AG04450 (cell line): ENCODE measurements at regions of chr2 and their contacts with region 1.

Region 1: DNA sequence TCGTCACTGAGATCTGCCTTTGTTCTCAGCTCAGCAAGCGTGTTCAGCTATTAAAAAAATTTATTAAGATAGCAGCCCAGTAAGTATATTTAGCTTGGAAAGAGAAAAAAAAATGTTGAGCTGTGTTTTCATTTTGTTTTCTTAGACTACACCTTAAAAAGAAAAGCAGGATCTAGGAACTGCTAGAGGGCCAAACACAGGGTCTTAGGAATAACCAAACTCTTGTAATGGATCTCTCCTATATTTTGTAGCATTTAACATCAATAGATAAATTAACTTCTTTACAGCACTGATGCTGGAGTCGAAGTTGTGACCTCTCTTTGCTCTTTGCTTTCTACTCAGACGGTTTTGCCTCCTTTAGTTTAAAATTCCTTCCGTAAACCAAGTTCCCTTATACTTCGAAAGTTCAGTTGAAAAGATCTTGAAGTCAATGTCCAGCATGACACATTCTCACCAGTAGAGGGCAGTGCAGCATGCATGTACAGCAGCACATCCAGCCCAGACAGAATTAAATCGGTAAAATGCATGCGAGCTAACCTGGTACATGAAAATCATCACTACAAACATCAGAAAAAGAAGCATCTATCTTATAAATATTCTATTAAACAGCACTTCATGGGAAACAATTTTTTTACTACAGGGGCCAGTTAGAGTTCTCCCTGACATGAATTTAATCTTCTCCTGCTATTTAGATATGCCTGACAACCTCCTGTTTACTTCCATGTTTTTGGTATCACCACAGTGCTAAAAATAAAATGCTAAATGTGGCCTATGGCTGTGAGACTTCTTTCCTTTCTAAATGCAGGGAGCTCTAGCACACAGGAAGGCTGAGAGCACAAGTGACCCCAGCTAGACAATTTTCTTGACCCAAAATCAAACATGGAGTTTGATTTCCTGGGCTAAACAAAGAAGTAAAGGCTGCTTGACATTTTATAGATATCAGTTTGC is 48.2 kb upstream of the MAP3K20 start:
- DNase-seq: peak; percentile 84
- H3K4me3 ChIP-seq: no peak overlapping the region
- H3K27ac ChIP-seq: no peak overlapping the region
- H3K27me3 ChIP-seq: no peaks in the 10 kb centered on the region
- CTCF ChIP-seq: peak; percentile 89

Region 2: GRCh38 chr2:172806493-172806892 is 221.0 kb before region 1 on chr2:
- CTCF ChIA-PET with region 1: interaction called, 97 read pairs
- POLR2A ChIA-PET with region 1: no interaction called
- DNase-seq: peak; percentile 29
- H3K4me3 ChIP-seq: no peak overlapping the region
- H3K27ac ChIP-seq: no peak overlapping the region
- H3K27me3 ChIP-seq: no peaks in the 10 kb centered on the region
- CTCF ChIP-seq: peak; percentile 96

Region 3: DNA sequence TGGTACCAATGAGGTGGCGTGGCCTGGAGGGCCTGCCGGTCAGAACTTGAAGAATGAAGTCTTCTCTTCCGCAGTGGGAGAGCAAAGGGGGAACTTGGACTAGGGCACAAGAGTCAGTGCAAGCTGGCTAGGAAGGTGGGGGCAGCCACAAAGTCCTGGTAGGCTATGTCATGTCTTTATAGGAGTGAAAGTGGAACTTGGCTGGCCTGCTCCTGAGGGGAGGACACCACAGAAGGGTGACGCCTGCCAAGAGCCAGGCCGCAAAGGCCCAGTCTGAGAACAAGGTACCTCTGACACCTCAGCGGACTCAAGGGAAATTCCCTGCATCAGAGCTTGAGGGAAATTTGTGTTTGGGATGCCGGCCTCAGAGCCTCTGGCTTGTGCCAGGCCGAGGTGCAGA is 16.0 kb after region 1 on chr2:
- CTCF ChIA-PET with region 1: interaction called, 28 read pairs
- POLR2A ChIA-PET with region 1: interaction called, 8 read pairs
- DNase-seq: no peak
- H3K4me3 ChIP-seq: no peak overlapping the region
- H3K27ac ChIP-seq: no peak overlapping the region
- H3K27me3 ChIP-seq: no peaks in the 10 kb centered on the region
- CTCF ChIP-seq: no peak

Region 4: GRCh38 chr2:173090276-173090877 is 62.9 kb after region 1 on chr2:
- CTCF ChIA-PET with region 1: interaction called, 24 read pairs
- POLR2A ChIA-PET with region 1: interaction called, 6 read pairs
- DNase-seq: no peak
- H3K4me3 ChIP-seq: peak overlapping the region; percentile 40
- H3K27ac ChIP-seq: peak overlapping the region; percentile 54
- H3K27me3 ChIP-seq: no peaks in the 10 kb centered on the region
- CTCF ChIP-seq: no peak

Region 5: DNA sequence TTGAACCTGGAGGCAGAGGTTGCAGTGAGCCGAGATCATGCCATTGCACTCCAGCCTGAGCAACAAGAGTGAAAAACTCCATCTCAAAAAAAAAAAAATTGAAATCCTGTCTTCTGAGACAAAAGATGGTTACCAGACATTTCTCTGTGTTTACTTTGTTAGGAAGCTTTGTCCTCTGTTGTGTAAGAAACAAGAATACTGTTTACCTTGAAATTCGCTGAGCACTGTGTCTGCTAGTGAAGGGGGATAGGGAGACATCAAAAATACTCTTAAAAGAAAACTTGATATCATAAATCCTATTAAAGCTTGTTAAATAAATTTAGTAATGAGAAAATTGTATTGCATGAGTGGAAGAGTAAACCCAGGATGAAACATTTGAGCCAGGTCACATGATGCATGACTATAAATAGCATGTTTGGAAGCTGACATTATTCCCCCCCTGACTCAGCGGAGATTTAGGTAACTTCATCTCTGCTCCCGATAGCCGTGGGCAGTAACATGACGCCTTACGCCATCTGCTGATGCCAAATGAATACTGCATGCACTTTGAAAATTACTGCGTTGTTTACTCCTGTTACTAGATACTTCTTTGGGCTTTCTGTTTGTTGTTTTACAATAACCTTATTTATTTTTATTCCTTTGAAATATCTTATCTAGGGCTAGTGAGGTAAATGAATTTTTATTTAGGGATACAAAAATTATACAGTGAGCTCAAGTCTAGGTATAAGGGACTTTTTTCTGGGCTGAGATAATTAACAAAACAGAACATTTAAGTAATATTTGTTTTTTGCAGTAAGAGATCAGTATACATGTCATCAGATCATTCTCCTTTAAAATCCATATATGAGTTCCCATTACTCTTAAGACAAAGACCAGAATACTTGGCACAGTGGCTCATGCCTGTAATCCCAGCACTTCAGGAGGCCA is 183.1 kb after region 1 on chr2:
- CTCF ChIA-PET with region 1: interaction called, 324 read pairs
- POLR2A ChIA-PET with region 1: interaction called, 8 read pairs
- DNase-seq: peak; percentile 91
- H3K4me3 ChIP-seq: no peak overlapping the region
- H3K27ac ChIP-seq: peak overlapping the region; percentile 54
- H3K27me3 ChIP-seq: no peaks in the 10 kb centered on the region
- CTCF ChIP-seq: peak; percentile 92

Region 6: DNA sequence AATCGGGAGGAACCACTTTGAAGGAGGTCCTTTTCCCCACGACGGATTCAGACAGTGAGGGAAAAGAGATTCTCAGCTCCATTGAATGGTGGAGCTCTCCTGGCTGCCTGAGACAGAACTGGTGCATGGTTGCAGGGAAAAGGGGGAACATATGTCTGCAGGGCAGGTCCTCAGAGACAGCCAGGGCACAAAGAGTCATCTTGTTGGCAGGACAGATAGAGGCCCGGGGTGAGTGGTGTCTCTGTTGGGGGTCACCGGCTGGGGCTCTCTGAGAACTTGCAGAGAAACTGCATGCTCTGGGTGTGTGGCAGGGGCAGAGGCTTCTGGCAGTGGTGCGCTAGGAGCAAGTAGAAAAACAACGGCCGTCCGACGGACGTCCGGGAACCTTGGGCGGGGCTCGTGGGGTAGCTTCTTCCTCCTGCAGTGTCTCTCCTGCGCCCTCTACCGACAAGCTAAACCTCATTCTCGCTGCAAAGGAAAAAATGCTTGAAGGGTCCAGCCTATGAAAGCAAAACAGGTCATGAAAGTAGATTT is 421.6 kb after region 1 on chr2:
- CTCF ChIA-PET with region 1: interaction called, 19 read pairs
- POLR2A ChIA-PET with region 1: no interaction called
- DNase-seq: peak; percentile 42
- H3K4me3 ChIP-seq: peak overlapping the region; percentile 38
- H3K27ac ChIP-seq: no peak overlapping the region
- H3K27me3 ChIP-seq: peaks cover 19% of the 10 kb centered on the region
- CTCF ChIP-seq: peak; percentile 90